AG04449 (cell line): ENCODE measurements at regions of chr12 and their contacts with region 1.

Region 1: DNA sequence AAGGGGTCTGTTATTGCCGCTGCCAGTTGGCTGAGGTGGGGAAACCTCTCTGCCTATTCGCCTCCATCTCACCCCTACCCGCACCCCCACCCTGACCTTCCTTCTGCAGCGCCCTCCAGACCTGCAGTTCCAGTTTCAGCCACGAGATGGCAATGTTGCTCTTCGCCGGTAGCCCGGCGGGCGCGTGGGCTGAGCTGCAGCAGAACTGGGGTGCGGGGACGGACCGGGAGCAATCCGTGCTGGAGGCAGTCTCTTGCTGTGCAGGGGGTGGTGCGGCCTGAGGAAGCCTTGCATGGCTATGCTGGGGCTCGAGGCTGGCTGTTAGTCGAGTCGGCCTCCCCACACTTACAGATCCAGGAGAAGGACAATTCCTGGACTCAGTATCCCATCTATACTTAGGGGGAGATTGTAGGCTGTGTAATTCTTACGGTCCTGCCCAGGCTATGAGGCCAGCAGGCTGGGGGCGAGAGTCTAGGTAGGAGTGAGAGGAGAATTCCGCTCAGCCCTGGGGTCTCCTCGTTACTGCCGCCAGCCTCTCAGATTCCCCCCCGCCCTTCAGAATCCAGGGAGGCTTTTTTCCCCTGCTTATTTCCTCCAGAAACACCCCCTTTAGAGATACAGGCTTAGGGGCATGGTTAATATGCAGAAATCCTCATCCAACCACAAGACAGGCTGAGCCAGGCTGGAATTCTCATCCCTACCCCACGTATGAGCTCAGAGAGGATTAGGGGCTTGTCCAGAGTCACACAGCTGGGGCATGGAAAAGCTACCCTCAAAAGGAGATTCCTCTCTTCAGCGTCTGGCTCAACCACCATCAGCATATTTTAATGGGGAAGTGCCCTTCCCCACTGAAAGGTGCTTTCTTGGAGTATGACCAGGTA is 118.2 kb downstream of the AACS start:
- DNase-seq: peak; percentile 44
- H3K4me3 ChIP-seq: peak overlapping the region; percentile 8; the same call in 1 of the 2 replicates
- CTCF ChIP-seq: peak; percentile 98

Region 2: DNA sequence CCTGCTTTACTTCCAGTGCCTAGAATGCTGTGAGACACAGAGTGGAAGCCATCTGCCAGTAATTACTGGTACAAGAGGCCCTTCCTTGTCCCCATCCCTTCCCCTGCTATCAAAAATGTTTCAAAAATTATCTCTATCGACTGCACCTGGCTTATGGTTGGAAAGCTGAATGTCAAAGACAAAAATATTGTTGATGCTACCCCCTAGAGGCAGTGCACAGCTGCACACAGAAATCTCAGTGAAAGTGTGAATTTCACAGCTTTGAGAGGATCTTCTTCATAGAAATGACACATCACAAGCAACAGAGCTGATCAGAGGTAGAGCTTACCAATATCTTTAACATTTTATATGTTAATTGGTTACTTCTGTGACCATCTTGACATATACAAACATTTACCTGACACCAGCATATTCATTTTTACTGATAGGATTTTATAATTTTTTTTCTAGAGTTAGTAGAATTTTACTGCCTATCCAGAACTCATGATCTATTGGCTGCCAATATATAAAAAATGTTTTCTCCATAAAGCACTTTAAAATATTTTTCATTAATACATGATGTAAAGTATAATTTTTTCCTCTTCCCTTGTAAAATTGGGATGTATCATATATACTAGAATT is 19.8 kb after region 1 on chr12:
- CTCF ChIA-PET with region 1: interaction called, 13 read pairs
- POLR2A ChIA-PET with region 1: no interaction called
- DNase-seq: no peak
- H3K4me3 ChIP-seq: no peak overlapping the region
- CTCF ChIP-seq: peak; percentile 49

Region 3: DNA sequence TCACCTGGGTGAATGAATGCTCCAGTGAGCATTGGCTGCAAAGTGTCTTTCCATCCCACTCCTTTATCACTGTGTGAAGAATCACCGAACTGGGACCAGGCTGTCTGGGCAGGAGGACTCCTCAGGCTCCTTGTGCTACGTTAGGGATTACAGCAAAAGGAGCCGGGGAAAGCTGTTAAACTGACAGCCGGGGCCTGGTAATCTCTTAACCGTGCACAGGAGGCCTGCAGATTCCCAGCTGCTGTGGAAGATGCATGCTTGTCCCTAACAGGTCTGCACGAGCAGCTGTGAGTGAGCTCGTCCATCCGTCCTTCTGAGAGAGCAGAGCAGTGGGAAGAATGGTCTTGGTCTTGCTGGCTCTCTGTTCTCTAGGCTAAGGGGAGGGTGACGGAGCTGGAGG is 113.3 kb after region 1 on chr12:
- CTCF ChIA-PET with region 1: no interaction called
- POLR2A ChIA-PET with region 1: no interaction called
- DNase-seq: no peak
- H3K4me3 ChIP-seq: no peak overlapping the region
- CTCF ChIP-seq: no peak

Region 4: GRCh38 chr12:125402874-125403789 is 219.7 kb after region 1 on chr12:
- CTCF ChIA-PET with region 1: interaction called, 56 read pairs
- POLR2A ChIA-PET with region 1: interaction called, 3 read pairs
- DNase-seq: no peak
- H3K4me3 ChIP-seq: no peak overlapping the region
- CTCF ChIP-seq: peak; percentile 22

Region 5: DNA sequence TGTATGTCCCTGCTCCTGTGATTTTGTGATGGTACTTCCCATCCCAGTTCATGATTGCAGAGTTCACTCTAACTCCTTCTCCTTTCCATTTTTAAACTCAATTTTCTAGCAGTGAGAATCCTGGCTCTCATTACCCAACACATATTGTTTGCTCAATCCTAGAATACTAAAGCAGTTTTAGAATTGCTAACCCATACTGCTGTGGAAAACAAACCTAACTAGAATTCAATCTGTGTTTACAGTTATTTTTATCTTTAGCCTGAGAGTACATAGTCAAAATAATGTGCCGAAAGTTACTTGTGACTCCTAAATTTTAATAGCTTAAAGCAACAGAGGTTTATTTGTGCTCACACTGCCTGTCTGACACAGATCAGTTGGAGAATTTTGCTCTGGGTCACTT is 389.8 kb after region 1 on chr12:
- CTCF ChIA-PET with region 1: no interaction called
- POLR2A ChIA-PET with region 1: no interaction called
- DNase-seq: no peak
- H3K4me3 ChIP-seq: no peak overlapping the region
- CTCF ChIP-seq: no peak